Posterior vena cava (tissue), 2 donors: ENCODE measurements at regions of chr16 and their contacts with region 1.

Region 1: GRCh38 chr16:13344001-13344400 is 442.6 kb downstream of the SHISA9 start:
- DNase-seq: no peak

Region 2: DNA sequence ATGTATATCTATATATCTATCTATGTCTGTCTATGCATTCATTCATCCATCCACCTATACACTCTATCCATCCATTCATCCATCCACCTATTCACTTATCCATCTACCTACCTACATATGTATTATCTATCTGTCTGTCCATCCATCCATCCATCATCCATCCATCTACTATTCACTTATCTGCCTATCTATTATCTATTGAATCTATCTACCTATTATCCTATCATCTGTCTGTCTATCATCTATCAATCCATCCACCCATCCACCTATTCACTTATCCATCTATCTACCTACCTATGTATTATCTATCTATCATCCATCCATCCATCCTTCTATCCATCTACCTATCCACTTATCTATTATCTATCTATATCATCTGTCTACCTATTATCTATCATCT is 140.3 kb before region 1 on chr16:
- intact Hi-C with region 1: no loop called
- DNase-seq: no peak

Region 3: GRCh38 chr16:13892301-13892700 is 548.3 kb after region 1 on chr16:
- intact Hi-C with region 1: loop called in 1 of 2 experiments (anchors 5 kb)
- DNase-seq: no peak